ENCODE measurements at regions of chr1 and their contacts with region 1.

Region 1: DNA sequence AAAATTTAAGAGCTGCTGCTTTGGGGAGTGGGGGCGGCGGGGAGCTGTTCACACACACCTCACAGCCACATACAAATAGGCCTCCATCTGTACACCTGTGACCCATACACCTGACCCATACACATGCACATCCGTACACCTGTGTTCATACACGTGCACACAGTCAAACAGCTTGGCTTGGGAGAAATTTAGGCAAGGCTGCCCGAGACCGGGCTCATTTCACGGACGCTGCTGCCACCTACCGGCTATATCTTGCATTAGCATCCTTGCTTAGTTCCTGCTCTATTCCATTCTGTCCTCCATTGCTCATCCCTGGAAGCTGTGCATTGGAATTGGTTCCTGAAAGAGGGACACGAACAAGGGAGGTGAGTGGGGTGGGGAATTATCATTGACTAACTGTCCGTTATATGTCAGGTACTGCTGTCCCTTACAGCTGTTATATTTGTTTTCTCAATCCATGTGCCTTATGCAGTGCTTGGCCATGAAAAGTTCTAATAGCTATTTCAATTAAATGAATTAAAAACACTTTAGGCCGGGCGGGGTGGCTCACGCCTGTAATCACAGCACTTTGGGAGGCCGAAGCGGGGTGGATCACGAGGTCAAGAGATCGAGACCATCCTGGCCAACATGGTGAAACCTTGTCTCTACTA is 37.1 kb upstream of the EPB41 start:
- DNase-seq: peak; percentile 80
- H3K4me3 ChIP-seq: peak overlapping the region in 1 of 2 experiments; percentile 31; a peak in 1 of 4 replicates
- H3K27ac ChIP-seq: no peak overlapping the region
- H3K4me1 ChIP-seq: peaks cover 0 to 3% of the 10 kb centered on the region in 2 experiments; a peak in 1 of 4 replicates
- H3K27me3 ChIP-seq: no peaks in the 10 kb centered on the region
- CTCF ChIP-seq: peak; percentile 91
- EP300 ChIP-seq: no peak
- RAD21 ChIP-seq: peak; percentile 99

Region 2: DNA sequence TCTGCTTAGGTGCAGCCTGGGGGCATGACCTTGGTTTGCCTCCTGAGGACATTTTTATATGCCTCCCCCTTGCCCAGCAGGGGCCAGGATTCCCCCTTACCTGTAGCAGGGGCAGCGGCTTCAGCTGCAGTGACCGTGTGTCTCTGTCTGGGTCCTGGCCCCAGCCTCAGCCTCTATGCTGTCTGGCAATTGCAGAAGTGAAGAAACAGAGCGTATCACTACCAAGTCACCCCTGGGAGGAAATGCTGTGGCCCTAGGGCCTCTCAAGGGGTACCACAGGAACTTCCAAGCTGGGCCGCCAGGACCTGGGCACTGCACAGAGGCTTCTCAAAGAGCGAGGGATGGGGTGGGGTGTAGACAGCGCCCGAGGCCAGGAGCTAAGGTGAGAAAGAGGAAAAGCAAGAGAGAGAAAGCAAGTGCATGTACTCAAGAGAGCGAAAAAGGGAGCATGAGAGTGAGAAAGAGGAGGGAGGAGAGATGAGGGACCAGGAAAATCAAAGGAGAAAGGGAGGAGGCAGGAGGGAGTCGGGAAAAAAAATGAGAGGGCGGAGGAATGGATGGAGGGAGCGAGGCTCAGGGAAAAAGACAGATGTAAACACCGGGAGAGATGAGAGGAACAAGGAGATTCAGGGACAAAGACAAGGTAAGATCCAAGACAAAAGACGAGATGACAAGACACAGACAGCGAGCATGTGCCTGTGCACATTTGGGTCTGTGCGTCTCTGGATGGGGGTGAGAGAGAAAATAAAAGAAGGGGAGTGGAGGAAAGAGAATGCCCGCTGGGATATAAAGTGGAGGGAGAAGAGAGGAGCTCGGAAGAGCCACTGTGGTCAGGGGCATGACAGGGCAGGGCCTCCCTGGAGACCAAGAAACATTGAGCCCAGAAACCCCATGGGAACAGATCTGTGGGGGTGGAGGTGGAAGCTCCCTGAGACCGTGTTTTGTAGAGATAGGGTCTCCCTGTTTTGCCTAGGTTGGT is 700.5 kb before region 1 on chr1 and contains the start of gene PTAFR:
- CTCF ChIA-PET with region 1: no interaction called
- POLR2A ChIA-PET with region 1: no interaction called
- DNase-seq: no peak
- H3K4me3 ChIP-seq: no peak within 1 kb of the TSS
- H3K27ac ChIP-seq: no peak within 1 kb of the TSS
- H3K4me1 ChIP-seq: peaks cover 0 to 16% of the 10 kb centered on the region in 2 experiments; a peak in 1 of 4 replicates
- H3K27me3 ChIP-seq: no peaks in the 10 kb centered on the region
- CTCF ChIP-seq: no peak
- EP300 ChIP-seq: no peak
- RAD21 ChIP-seq: no peak
- polyA plus RNA-seq, gene PTAFR: 0.05 and 0.06 TPM in 2 replicates

Region 3: DNA sequence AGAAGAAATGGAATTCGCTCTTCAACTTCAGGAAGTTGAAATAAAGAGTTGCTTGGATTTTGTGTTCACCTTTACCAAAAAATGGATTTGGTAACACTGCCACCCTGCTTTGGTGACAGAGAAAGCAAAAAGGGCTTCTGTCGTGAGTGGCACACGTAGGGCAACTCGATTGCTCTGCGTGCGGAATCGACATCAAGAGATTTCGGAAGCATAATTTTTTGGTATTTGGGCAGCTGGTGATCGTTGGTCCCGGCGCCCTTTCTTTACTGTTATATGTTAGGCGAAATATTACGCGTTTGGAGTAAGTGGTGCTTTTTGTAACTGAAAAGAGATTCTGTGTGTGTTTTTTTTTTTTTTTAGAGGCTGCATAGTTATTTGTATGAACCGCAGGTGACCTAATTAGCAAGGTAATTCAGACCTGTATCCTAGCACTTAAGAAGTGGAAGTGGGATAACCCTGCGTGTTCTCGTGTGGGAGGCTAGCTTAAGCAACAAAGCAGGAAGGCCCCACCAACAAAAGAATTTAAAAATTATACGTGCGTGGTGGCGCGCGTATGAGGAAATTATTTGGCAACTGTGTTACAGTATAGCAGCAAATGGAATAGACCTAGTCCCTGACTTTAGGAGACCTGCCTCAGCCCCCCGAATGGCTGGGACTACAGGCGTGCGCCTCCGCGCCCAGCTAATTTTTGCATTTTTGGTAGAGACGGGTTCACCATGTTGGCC is 228.6 kb before region 1 on chr1 and contains the start of gene RNU11:
- CTCF ChIA-PET with region 1: interaction called, 39 read pairs
- POLR2A ChIA-PET with region 1: interaction called, 12 read pairs
- DNase-seq: peak; percentile 73
- H3K4me3 ChIP-seq: peak within 1 kb of the TSS; percentile 39 to 40
- H3K27ac ChIP-seq: peak within 1 kb of the TSS; percentile 96 to 99
- H3K4me1 ChIP-seq: peaks cover 0 to 9% of the 10 kb centered on the region in 2 experiments; a peak in 2 of 4 replicates
- H3K27me3 ChIP-seq: no peaks in the 10 kb centered on the region
- CTCF ChIP-seq: no peak
- EP300 ChIP-seq: peak; percentile 15 to 80; a peak in 1 of 4 replicates
- RAD21 ChIP-seq: no peak; the same call in 1 of the 2 replicates
- polyA plus RNA-seq, gene RNU11: not detected in 2 replicates

Region 4: DNA sequence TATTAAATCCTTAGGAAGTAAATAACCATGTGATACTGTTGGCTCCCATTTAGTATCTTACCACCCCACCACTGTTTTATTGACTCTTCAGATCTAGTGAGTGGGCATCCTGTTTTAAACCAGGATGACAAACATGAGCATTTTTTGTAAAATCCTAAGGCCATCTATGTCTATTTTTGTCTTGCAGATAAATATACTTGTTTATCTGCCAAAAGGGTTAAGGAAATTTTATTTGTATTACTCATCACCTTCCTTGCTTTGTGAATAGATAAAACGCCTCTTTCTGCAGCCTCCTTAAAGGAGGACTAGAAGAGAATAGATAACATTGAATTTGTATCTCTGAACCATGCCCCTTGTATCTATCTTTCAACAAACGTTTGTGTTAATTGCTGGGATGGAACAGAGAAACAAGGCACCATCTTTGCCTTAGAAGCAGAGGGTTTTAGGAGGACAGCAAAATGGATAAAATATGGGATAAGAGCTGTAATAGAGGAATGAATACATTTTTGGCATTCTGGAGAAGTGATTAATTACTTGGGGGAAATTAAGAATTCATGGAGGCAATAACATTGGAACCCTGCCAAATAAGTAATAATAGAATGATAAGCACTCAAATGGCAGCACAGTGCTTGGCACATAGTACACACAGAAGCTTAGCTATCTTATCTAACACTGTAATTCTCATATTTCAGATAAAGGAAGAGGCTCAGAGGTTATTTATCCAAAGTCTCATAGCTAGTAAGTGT is 125.8 kb before region 1 on chr1:
- CTCF ChIA-PET with region 1: interaction called, 12 read pairs
- POLR2A ChIA-PET with region 1: no interaction called
- DNase-seq: no peak
- H3K4me3 ChIP-seq: no peak overlapping the region
- H3K27ac ChIP-seq: peak overlapping the region in 1 of 2 experiments; percentile 51; a peak in 2 of 4 replicates
- H3K4me1 ChIP-seq: peaks cover 2 to 30% of the 10 kb centered on the region in 2 experiments; a peak in 3 of 4 replicates
- H3K27me3 ChIP-seq: no peaks in the 10 kb centered on the region
- CTCF ChIP-seq: no peak
- EP300 ChIP-seq: no peak
- RAD21 ChIP-seq: no peak

Region 5: DNA sequence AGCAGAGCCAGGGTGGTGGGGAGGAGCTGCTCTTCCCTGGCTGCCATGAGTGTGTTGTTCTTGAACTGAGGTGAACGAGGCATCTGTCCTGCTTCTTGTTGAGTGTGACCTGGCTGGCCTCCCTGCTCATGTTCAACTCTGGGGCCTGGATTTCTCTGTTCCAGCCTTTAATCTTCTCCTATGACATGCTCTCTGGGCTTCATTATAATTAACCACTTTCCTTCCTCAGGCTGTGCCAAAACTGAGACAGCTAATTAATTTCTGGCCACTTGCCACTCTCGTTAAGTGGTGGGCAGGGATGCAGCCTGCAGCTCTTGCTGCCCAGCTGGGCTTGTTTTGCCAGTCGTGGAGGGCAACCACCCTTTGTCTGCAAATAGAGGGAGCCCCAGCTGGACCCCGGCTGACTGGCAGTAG is 42.0 kb before region 1 on chr1:
- CTCF ChIA-PET with region 1: interaction called, 27 read pairs
- POLR2A ChIA-PET with region 1: no interaction called
- DNase-seq: peak; percentile 85
- H3K4me3 ChIP-seq: no peak overlapping the region
- H3K27ac ChIP-seq: peak overlapping the region in 1 of 2 experiments; percentile 90; a peak in 2 of 4 replicates
- H3K4me1 ChIP-seq: peaks cover 0 to 57% of the 10 kb centered on the region in 2 experiments; a peak in 1 of 4 replicates
- H3K27me3 ChIP-seq: no peaks in the 10 kb centered on the region
- CTCF ChIP-seq: no peak
- EP300 ChIP-seq: peak in 1 of 2 experiments; percentile 98; a peak in 2 of 4 replicates
- RAD21 ChIP-seq: peak; percentile 29

Region 6: GRCh38 chr1:28853093-28853742 is 24.0 kb before region 1 on chr1:
- CTCF ChIA-PET with region 1: interaction called, 15 read pairs
- POLR2A ChIA-PET with region 1: interaction called, 4 read pairs
- DNase-seq: no peak
- H3K4me3 ChIP-seq: no peak overlapping the region
- H3K27ac ChIP-seq: no peak overlapping the region
- H3K4me1 ChIP-seq: no peaks in the 10 kb centered on the region; a peak in 1 of 4 replicates
- H3K27me3 ChIP-seq: no peaks in the 10 kb centered on the region
- CTCF ChIP-seq: no peak
- EP300 ChIP-seq: no peak
- RAD21 ChIP-seq: no peak

Region 7: GRCh38 chr1:28865997-28866650 is 11.1 kb before region 1 on chr1:
- CTCF ChIA-PET with region 1: interaction called, 84 read pairs
- POLR2A ChIA-PET with region 1: interaction called, 7 read pairs
- DNase-seq: no peak
- H3K4me3 ChIP-seq: no peak overlapping the region
- H3K27ac ChIP-seq: no peak overlapping the region
- H3K4me1 ChIP-seq: peaks cover 0 to 6% of the 10 kb centered on the region in 2 experiments; a peak in 1 of 4 replicates
- H3K27me3 ChIP-seq: no peaks in the 10 kb centered on the region
- CTCF ChIP-seq: no peak
- EP300 ChIP-seq: no peak
- RAD21 ChIP-seq: no peak

Region 8: GRCh38 chr1:29202584-29203340 is 325.5 kb after region 1 on chr1:
- CTCF ChIA-PET with region 1: interaction called, 95 read pairs
- POLR2A ChIA-PET with region 1: no interaction called
- DNase-seq: peak; percentile 90
- H3K4me3 ChIP-seq: no peak overlapping the region; a peak in 1 of 4 replicates
- H3K27ac ChIP-seq: peak overlapping the region; percentile 62 to 83
- H3K4me1 ChIP-seq: peaks cover 9 to 12% of the 10 kb centered on the region in 2 experiments; a peak in 2 of 4 replicates
- H3K27me3 ChIP-seq: no peaks in the 10 kb centered on the region
- CTCF ChIP-seq: peak; percentile 98
- EP300 ChIP-seq: peak in 1 of 2 experiments; percentile 21; a peak in 1 of 4 replicates
- RAD21 ChIP-seq: peak; percentile 97

Measured in SK-N-SH (cell line).